Dendritic cell treated with granulocyte-macrophage colony-stimulating factor and Interleukin-4, amounts not matched to agents 40 ng/mL and 50 ng/mL, for 4 days (primary cell): ENCODE measurements at regions of chr3 and their contacts with region 1.

Region 1: GRCh38 chr3:170414202-170414663 is 4.4 kb upstream of the CLDN11 start:
- H3K4me3 Mint-ChIP-seq: no peak overlapping the region
- H3K27ac Mint-ChIP-seq: no peak overlapping the region
- H3K4me1 Mint-ChIP-seq: peaks cover 11% of the 10 kb centered on the region
- H3K27me3 Mint-ChIP-seq: peaks cover 35% of the 10 kb centered on the region

Region 2: DNA sequence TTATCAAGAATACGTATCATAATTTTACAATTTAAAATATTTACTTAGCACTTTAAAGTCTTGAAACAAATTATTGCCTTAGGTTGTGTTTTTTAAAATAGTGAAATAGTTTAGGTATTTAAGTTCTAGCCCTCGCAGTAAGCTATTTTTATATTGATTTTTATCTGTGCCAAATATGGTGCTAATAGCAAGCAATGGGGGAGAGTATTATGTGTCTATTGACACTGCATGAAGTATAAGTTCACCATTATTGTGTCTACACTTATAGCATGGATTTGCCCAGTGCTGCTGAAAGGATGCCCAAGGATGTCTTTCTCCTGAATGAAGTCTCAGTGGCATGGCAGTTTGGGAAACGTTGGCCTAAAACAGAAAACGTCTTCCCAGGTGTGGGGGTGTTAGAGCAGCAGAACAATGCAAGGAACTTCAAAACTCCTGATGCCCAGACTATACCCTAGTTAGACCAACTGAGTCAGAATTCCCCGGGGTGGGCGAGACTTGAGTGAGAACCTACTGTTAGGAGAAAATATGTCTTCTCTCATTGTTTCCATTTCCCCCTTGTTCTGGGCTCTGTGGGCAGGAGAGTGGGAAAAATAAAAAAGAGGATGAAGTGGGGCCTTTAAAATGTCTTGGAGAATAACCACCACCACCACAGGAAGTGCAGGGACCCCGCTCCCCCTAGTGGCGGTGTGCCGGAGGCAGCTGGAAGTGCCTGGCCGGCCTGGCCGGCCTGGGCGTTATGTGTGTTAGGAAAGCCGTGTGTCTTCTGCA is 275.8 kb after region 1 on chr3:
- intact Hi-C with region 1: loop called (anchors 1 kb)
- H3K4me3 Mint-ChIP-seq: no peak overlapping the region
- H3K27ac Mint-ChIP-seq: no peak overlapping the region
- H3K4me1 Mint-ChIP-seq: no peaks in the 10 kb centered on the region
- H3K27me3 Mint-ChIP-seq: no peaks in the 10 kb centered on the region

Region 3: GRCh38 chr3:170811928-170812591 is 397.8 kb after region 1 on chr3:
- intact Hi-C with region 1: loop called (anchors 1 kb)
- H3K4me3 Mint-ChIP-seq: no peak overlapping the region
- H3K27ac Mint-ChIP-seq: no peak overlapping the region
- H3K4me1 Mint-ChIP-seq: peaks cover 5% of the 10 kb centered on the region
- H3K27me3 Mint-ChIP-seq: no peaks in the 10 kb centered on the region